Activated CD4-positive, alpha-beta memory T cell treated with anti-CD3 and anti-CD28 coated beads, Interleukin-2, amount 10 ng/mL, durations not matched to agents 7 days and 5 days (primary cell): ENCODE measurements at regions of chr14 and their contacts with region 1.

Region 1: GRCh38 chr14:103715052-103716000 is at the starts of genes XRCC3 and ZFYVE21:
- DNase-seq: peak; percentile 100
- H3K4me3 Mint-ChIP-seq: peak within 1 kb of the TSS; percentile 88
- H3K27ac Mint-ChIP-seq: peak within 1 kb of the TSS; percentile 73
- H3K4me1 Mint-ChIP-seq: peaks cover 56% of the 10 kb centered on the region
- H3K27me3 Mint-ChIP-seq: no peaks in the 10 kb centered on the region
- total RNA-seq, gene XRCC3: 35.9 to 39.6 TPM
- total RNA-seq, gene ZFYVE21: 17.4 to 17.8 TPM

Region 2: DNA sequence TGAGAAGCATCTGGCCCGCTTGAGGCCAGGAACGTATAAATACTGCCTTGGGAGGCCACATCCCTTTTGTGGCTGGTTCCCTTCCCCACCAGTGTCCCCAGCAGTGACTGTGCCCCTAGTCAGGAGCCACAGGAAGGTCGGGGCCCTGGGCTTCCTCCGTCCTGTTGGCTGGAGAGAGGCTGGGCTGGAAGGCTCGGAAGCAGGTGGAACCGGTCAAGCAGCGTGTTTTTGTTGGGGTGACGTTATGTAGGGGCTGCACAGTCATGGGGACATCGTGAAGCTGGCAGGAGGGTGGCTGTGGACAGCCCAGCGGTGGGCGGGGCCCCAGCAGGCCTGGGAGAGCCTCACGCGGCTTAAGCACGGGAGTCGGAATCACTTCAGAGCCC is 10.2 kb before region 1 on chr14:
- CTCF ChIA-PET with region 1: no interaction called
- POLR2A ChIA-PET with region 1: interaction called, 15 read pairs
- DNase-seq: no peak
- H3K4me3 Mint-ChIP-seq: no peak overlapping the region
- H3K27ac Mint-ChIP-seq: no peak overlapping the region
- H3K4me1 Mint-ChIP-seq: peaks cover 15% of the 10 kb centered on the region
- H3K27me3 Mint-ChIP-seq: no peaks in the 10 kb centered on the region